SK-N-SH (cell line): ENCODE measurements at regions of chrX and their contacts with region 1.

Region 1: DNA sequence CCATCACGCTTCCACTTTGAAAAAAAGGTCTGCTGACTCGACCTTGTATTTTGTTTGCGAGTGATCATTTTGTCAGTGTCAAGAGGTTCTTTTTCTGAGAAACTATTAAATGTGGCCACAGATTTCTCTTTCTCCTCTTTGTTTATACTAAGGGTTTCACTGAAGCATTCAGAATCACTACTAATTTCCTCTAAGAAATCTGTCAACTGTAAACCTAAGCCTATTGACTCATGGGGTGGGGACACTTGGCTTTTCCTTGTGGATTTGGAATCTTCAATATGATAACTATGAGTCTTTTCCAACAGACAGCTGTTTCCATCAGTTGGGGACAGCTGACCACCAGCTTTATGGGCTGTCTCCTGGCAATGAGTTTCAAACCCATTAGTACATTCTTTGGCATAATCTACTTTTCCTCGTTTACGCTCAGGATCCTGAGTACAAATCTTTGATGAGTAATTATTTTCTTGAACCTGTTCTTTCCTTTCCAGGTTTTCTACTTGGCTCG is 13.8 kb downstream of the PGRMC1 start:
- DNase-seq: no peak
- H3K4me3 ChIP-seq: no peak overlapping the region
- H3K27ac ChIP-seq: no peak overlapping the region
- H3K4me1 ChIP-seq: no peaks in the 10 kb centered on the region
- H3K27me3 ChIP-seq: no peaks in the 10 kb centered on the region
- CTCF ChIP-seq: no peak
- EP300 ChIP-seq: no peak
- RAD21 ChIP-seq: no peak

Region 2: GRCh38 chrX:119266364-119266995 is 16.6 kb after region 1 on chrX:
- CTCF ChIA-PET with region 1: interaction called, 14 read pairs
- POLR2A ChIA-PET with region 1: no interaction called
- DNase-seq: peak; percentile 53
- H3K4me3 ChIP-seq: peak overlapping the region in 1 of 2 experiments; percentile 17; a peak in 1 of 4 replicates
- H3K27ac ChIP-seq: no peak overlapping the region
- H3K4me1 ChIP-seq: no peaks in the 10 kb centered on the region
- H3K27me3 ChIP-seq: peaks cover 36% of the 10 kb centered on the region; the same call in 1 of the 2 replicates
- CTCF ChIP-seq: peak; percentile 86
- EP300 ChIP-seq: no peak
- RAD21 ChIP-seq: peak; percentile 66

Region 3: GRCh38 chrX:119391279-119391678 is 141.4 kb after region 1 on chrX:
- CTCF ChIA-PET with region 1: no interaction called
- POLR2A ChIA-PET with region 1: no interaction called
- DNase-seq: peak; percentile 26
- H3K4me3 ChIP-seq: no peak overlapping the region
- H3K27ac ChIP-seq: no peak overlapping the region
- H3K4me1 ChIP-seq: no peaks in the 10 kb centered on the region
- H3K27me3 ChIP-seq: no peaks in the 10 kb centered on the region; the same call in 1 of the 2 replicates
- CTCF ChIP-seq: peak; percentile 47; the same call in 1 of the 2 replicates
- EP300 ChIP-seq: no peak
- RAD21 ChIP-seq: peak; percentile 10; the same call in 1 of the 2 replicates

Region 4: GRCh38 chrX:119784747-119785446 is 535.0 kb after region 1 on chrX:
- CTCF ChIA-PET with region 1: no interaction called
- POLR2A ChIA-PET with region 1: no interaction called
- DNase-seq: peak; percentile 47
- H3K4me3 ChIP-seq: no peak overlapping the region
- H3K27ac ChIP-seq: no peak overlapping the region
- H3K4me1 ChIP-seq: peaks cover 3 to 8% of the 10 kb centered on the region in 2 experiments; a peak in 1 of 4 replicates
- H3K27me3 ChIP-seq: no peaks in the 10 kb centered on the region
- CTCF ChIP-seq: peak; percentile 62
- EP300 ChIP-seq: no peak
- RAD21 ChIP-seq: peak; percentile 33